Activated CD4-positive, alpha-beta T cell treated with anti-CD3 and anti-CD28 coated beads for 36 hours (primary cell): ENCODE measurements at regions of chr2 and their contacts with region 1.

Region 1: GRCh38 chr2:186569897-186570296 is 20.0 kb upstream of the ITGAV start:
- DNase-seq: no peak
- ATAC-seq: no peak
- H3K4me3 Mint-ChIP-seq: no peak overlapping the region
- H3K27ac Mint-ChIP-seq: no peak overlapping the region
- H3K4me1 Mint-ChIP-seq: no peaks in the 10 kb centered on the region
- H3K27me3 Mint-ChIP-seq: peaks cover 3% of the 10 kb centered on the region

Region 2: DNA sequence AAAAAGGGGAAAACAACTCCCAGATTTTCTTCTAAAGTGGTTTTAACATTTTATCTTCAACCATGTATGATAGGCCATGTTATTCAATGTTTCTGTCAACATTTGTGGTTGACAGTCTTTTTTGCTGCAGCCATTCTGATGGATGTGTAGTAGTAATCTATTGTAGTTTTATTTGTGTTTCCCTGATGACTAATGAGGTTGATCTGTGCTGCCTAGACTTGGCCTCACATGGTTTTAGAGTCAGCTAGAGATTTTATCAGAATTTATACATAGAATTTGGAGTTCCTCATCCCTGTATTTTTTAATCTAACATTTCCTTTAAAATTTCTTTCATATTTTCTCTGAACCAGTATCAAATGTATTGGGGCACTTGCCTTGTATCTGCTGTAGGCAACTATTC is 851.2 kb before region 1 on chr2:
- CTCF ChIA-PET with region 1: no interaction called
- POLR2A ChIA-PET with region 1: interaction called, 11 read pairs
- intact Hi-C with region 1: no loop called
- DNase-seq: no peak
- ATAC-seq: no peak
- H3K4me3 Mint-ChIP-seq: no peak overlapping the region
- H3K27ac Mint-ChIP-seq: no peak overlapping the region
- H3K4me1 Mint-ChIP-seq: no peaks in the 10 kb centered on the region
- H3K27me3 Mint-ChIP-seq: no peaks in the 10 kb centered on the region

Region 3: DNA sequence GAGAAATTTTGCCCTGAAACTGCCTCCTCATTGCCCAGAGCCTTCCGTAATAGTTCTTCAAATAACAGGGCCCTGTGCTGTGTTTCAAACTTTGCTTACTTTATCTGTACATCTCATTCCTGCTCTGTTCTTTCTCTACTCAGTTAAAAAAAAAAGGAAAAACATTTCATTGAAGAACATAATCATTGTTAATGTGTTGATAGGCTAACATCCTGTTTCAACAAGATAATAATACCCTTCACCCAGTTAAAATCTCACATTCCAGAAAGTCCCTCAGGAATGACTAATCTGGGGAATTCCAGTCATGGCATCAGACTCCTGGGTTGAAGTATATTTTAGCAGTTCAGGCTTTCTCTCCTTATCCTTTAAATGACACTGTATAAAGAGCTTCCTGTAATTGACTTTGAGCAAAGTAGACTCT is 25.6 kb before region 1 on chr2:
- CTCF ChIA-PET with region 1: no interaction called
- POLR2A ChIA-PET with region 1: no interaction called
- intact Hi-C with region 1: no loop called
- DNase-seq: no peak
- ATAC-seq: no peak
- H3K4me3 Mint-ChIP-seq: no peak overlapping the region
- H3K27ac Mint-ChIP-seq: no peak overlapping the region
- H3K4me1 Mint-ChIP-seq: no peaks in the 10 kb centered on the region
- H3K27me3 Mint-ChIP-seq: peaks cover 8% of the 10 kb centered on the region